ENCODE measurements at regions of chr1 and their contacts with region 1.

Region 1: GRCh38 chr1:171566467-171566866 is 55.6 kb upstream of the MYOCOS start:
- DNase-seq: peak; percentile 11
- H3K4me3 ChIP-seq: no peak overlapping the region
- H3K27ac ChIP-seq: no peak overlapping the region
- H3K4me1 ChIP-seq: no peaks in the 10 kb centered on the region
- H3K27me3 ChIP-seq: no peaks in the 10 kb centered on the region
- CTCF ChIP-seq: peak; percentile 29; the same call in 1 of the 2 replicates

Region 2: GRCh38 chr1:171550050-171550449 is 16.4 kb before region 1 on chr1:
- CTCF ChIA-PET with region 1: no interaction called
- POLR2A ChIA-PET with region 1: no interaction called
- intact Hi-C with region 1: loop called (anchors 2 kb)
- DNase-seq: no peak
- H3K4me3 ChIP-seq: no peak overlapping the region
- H3K27ac ChIP-seq: no peak overlapping the region
- H3K4me1 ChIP-seq: no peaks in the 10 kb centered on the region
- H3K27me3 ChIP-seq: no peaks in the 10 kb centered on the region
- CTCF ChIP-seq: no peak